ENCODE measurements at regions of chr19 and their contacts with region 1.

Region 1: DNA sequence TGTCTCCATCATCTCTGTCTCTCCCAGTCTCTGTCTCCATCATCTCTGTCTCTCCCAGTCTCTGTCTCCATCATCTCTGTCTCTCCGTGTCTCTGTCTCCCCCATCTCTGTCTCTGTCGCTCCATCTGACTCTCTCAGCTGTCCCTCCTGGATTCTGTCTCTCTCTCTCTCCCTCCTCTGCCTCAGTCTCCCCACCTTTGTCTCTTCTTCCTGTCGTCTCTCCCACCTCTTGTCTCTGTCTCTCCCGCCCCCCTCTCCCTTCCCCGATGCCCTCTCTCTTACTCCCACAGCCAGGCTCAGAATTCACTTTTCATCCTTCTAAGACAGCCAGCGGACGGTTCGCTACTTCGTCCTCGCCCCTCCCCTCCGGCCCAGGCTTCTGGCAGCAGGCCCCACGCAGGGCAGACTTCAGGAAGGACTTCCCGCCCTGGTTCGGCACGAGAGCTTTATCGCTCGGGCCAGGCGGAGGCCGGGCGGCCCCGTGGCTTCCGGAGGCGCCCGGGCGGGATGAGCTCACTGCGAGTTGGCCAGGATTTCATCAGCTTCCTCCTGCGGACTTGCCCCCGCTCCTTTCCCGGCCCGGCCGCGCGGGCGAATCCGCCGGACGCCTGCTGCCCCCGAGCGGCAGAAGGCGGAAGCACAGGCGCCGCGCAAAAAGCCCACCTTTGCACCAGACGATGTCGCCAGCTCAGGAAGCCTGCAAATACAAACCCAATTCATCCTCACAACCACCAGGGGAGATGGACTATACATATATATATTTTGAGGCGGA is 12.4 kb upstream of the CCDC9 start:
- DNase-seq: peak; percentile 89
- CTCF ChIP-seq: peak; percentile 99

Region 2: GRCh38 chr19:46828484-46828883 is 415.5 kb before region 1 on chr19:
- CTCF ChIA-PET with region 1: no interaction called
- POLR2A ChIA-PET with region 1: no interaction called
- DNase-seq: no peak
- CTCF ChIP-seq: no peak

Region 3: GRCh38 chr19:47013041-47013517 is 230.9 kb before region 1 on chr19:
- CTCF ChIA-PET with region 1: interaction called, 13 read pairs
- POLR2A ChIA-PET with region 1: no interaction called
- DNase-seq: peak; percentile 82
- CTCF ChIP-seq: peak; percentile 98

Region 4: DNA sequence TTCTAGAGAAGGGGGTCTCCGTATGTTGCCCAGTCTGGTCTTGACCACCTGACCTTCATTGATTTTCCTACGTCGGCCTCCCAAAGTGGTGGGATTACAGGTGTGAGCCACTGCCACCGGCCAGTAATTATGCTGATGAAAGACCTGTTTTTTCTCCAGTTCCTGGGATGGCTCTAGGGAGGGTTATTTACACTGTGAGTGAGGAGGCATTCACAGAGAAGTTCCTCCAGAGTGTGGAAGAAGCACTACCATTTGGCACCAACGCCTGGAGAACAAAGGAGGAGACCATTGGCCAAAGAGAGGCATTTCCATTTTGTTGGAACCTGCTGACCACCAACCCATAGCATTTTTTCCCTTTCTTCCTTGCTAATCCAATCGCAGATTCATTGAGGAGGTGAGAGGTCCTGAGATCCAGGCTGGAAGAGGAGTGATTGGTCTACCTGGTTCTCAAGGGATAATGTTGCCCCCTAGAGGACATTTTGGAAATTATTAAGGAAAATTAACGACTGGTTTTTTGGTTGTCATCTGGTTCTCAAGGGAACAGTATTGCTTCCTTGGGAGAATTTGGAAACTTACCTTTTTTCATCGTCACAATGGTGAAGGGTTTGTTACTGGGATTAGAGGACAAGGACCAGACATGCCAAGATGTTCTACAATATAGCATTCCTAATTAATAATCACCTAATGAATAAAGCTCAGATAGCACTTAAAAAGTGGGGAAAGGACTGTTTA is 118.9 kb before region 1 on chr19:
- CTCF ChIA-PET with region 1: interaction called, 10 read pairs
- POLR2A ChIA-PET with region 1: no interaction called
- DNase-seq: peak; percentile 63
- CTCF ChIP-seq: peak; percentile 50

Region 5: GRCh38 chr19:47157431-47158321 is 86.3 kb before region 1 on chr19:
- CTCF ChIA-PET with region 1: interaction called, 128 read pairs
- POLR2A ChIA-PET with region 1: no interaction called
- DNase-seq: no peak
- CTCF ChIP-seq: no peak

Region 6: DNA sequence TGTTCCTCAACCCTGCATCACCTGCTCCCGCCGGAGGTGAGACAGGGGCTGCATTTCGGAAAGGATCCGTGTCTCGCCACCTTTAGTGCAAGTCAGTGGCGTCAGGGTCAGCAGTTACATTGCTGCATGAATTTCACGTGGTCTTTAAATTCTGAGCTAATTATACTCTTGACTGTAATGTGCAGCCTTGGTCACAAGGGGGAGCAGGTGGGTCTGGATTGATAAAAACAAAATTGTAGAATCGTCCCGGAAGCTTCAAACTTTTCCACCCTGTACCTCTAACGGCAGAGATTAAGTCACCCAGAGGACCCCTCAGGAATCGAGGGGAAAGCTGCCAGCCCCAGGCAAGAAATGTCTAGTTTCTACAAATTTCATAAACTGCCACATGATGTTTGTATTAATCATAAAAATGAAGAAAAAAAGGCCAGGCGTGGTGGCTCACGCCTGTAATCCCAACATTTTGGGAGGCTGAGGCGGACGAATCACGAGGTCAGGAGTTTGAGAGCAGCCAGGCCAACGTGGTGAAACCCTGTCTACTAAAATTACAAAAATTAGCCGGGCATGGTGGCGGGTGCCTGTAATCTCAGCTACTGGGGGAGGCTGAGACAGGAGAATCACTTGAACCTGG is 33.2 kb before region 1 on chr19:
- CTCF ChIA-PET with region 1: interaction called, 444 read pairs
- POLR2A ChIA-PET with region 1: interaction called, 13 read pairs
- DNase-seq: peak; percentile 78
- CTCF ChIP-seq: peak; percentile 80

Region 7: DNA sequence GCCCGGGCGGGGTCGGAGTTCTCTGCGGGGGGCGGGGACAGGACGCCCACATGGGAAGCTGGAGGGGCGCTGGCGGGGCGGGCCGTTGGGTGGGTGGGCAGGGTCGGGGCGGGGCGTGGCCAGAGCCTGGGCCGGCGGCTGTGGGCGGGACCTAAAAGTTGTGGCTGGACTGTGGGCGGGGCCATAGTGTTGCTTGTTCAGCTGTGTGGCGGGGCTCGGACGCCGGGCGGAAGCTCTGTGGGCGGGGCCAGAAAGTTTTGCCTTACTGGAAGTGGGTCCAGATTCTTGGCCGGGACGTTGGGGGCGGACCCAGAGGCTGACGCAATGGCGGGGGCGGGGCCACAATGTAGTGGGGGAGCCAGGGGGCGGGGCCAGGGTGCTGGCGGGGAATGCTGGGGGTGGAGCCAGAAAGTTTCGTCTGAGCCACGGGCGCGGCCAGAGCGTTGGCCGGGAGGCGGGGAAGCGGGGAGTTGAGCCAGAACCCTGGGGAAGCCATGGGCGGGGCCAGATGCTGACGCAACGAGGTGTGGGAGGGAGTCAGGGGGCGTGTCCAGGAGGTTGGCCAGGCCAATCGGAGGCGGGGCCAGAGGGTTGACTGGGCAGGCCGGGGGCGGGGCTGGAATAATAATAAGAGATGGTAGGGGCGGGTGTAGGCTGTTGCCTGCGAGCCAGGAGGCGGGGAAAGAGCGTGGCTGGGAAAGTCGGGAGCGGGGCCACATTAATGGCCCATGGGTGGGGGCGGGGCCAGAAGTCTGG is 12.9 kb after region 1 on chr19:
- CTCF ChIA-PET with region 1: interaction called, 103 read pairs
- POLR2A ChIA-PET with region 1: interaction called, 9 read pairs
- DNase-seq: peak; percentile 99
- CTCF ChIP-seq: no peak

Region 8: GRCh38 chr19:47370045-47370611 is 126.2 kb after region 1 on chr19:
- CTCF ChIA-PET with region 1: no interaction called
- POLR2A ChIA-PET with region 1: no interaction called
- DNase-seq: no peak
- CTCF ChIP-seq: no peak

Measured in GM10248 (cell line).